ENCODE measurements at regions of chr2 and their contacts with region 1.

Region 1: GRCh38 chr2:158006961-158007719 is 94.5 kb upstream of the UPP2 start:
- DNase-seq: no peak
- H3K4me3 Mint-ChIP-seq: no peak overlapping the region
- H3K27ac Mint-ChIP-seq: no peak overlapping the region
- H3K4me1 Mint-ChIP-seq: peaks cover 15% of the 10 kb centered on the region
- H3K27me3 Mint-ChIP-seq: no peaks in the 10 kb centered on the region

Region 2: GRCh38 chr2:157318884-157319283 is 688.3 kb before region 1 on chr2:
- intact Hi-C with region 1: loop called (anchors 5 kb)
- DNase-seq: no peak
- H3K4me3 Mint-ChIP-seq: no peak overlapping the region
- H3K27ac Mint-ChIP-seq: no peak overlapping the region
- H3K4me1 Mint-ChIP-seq: peaks cover 13% of the 10 kb centered on the region
- H3K27me3 Mint-ChIP-seq: no peaks in the 10 kb centered on the region

Region 3: DNA sequence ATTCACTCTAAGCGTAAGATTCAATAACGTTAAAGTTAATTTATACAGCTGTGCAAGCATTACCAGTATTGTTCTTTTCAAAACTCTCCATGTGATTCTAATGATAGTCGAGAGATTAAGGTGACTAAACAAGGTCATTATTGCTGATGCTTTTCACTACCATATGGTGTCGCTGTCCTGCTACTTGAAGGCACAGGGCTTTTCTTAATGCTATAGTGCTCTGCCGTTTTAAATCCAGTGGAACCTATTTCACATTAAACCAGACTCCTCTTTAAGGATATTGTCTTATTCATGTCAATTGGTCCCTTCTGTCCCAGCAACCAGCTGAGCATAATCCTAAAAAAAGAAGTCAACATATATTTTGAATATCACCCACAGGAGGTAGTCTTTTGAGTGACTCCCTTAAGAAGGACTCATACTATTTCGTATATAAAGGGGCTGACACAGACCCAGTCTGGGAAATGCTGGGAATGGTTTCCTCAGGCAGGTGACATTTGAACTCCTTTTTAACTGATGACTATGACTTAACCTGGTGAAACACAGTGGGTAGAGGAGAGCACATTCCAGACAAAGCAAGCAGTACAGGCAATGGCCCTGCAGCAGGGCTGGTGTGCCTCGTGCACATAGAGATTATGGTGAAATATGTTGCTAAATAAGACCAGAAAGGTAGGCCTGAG is 509.4 kb before region 1 on chr2:
- intact Hi-C with region 1: loop called (anchors 1 kb)
- DNase-seq: no peak
- H3K4me3 Mint-ChIP-seq: no peak overlapping the region
- H3K27ac Mint-ChIP-seq: no peak overlapping the region
- H3K4me1 Mint-ChIP-seq: peaks cover 18% of the 10 kb centered on the region
- H3K27me3 Mint-ChIP-seq: no peaks in the 10 kb centered on the region

Region 4: DNA sequence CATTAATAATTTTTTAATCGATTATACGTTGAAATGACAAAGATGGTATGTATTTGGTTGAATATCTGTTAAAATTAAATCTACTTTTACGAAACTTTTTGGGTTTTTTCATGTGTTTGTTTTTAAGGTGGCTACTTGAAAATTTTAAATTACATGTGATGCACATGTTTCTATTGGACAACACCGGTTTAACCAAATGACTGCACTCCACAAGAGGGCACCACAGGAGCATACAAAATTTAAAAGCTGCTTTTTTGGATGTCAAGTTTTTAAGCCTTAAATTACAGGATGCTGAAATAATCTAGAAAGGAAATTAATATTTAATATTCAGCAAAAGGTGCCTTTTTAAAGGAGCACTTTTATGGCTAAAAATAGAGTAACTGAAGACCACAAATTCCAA is 229.7 kb before region 1 on chr2:
- intact Hi-C with region 1: loop called (anchors 1 kb)
- DNase-seq: peak; percentile 20
- H3K4me3 Mint-ChIP-seq: no peak overlapping the region
- H3K27ac Mint-ChIP-seq: no peak overlapping the region
- H3K4me1 Mint-ChIP-seq: peaks cover 29% of the 10 kb centered on the region
- H3K27me3 Mint-ChIP-seq: no peaks in the 10 kb centered on the region

Region 5: GRCh38 chr2:157876066-157876787 is 130.9 kb before region 1 on chr2 and contains the start of gene ACVR1:
- intact Hi-C with region 1: loop called (anchors 1 kb)
- DNase-seq: peak; percentile 83
- H3K4me3 Mint-ChIP-seq: peak within 1 kb of the TSS; percentile 85
- H3K27ac Mint-ChIP-seq: peak within 1 kb of the TSS; percentile 86
- H3K4me1 Mint-ChIP-seq: peaks cover 62% of the 10 kb centered on the region
- H3K27me3 Mint-ChIP-seq: no peaks in the 10 kb centered on the region
- total RNA-seq, gene ACVR1: 26.7 and 27.1 TPM in 2 replicates